ENCODE measurements at regions of chr4 and their contacts with region 1.

Region 1: GRCh38 chr4:102620697-102621497 is 119.7 kb downstream of the NFKB1 start:
- DNase-seq: no peak
- ATAC-seq: peak; percentile 96

Region 2: GRCh38 chr4:103008875-103009729 is 388.2 kb after region 1 on chr4:
- intact Hi-C with region 1: loop called (anchors 1 kb)
- DNase-seq: no peak
- ATAC-seq: peak; percentile 82

Region 3: DNA sequence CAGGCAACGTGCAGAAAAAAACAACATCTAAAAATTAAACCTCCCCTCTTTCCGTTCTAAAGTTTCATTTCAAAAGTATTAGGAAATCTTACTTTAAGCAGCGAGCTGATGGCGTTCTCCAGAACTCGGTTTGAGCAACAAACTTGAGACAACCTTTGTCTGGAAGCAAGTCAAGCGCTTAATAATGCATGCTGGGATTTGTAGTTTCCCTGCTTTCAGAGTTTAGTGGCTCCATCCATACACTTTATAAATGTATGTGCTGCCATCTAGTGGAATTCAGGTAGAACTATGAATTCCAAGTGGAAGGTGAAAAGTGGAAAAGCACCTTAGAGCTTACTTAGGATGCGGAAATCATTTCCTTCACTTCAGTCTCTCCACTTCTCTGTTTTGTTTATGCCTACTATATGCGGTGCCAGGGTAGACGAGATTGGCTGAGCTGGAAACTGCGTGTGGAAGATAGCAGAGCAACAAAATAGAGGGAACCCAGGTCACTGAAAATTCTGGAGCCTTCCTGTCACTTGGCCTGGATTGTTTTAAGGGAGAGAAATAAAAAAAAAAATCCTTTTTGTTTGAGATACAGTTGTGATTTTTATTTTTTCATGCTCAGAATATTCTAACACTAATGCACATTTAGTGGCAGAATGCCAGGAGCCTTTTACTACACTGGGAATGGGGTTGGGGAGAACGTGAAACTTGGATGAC is 478.9 kb after region 1 on chr4 and contains the start of gene BDH2:
- intact Hi-C with region 1: loop called (anchors 10 kb)
- DNase-seq: no peak
- ATAC-seq: peak; percentile 98
- total RNA-seq, gene BDH2: 20.1 TPM

Measured in Right ventricle myocardium superior (tissue), 1 donor.